ENCODE measurements at regions of chr9 and their contacts with region 1.

Region 1: DNA sequence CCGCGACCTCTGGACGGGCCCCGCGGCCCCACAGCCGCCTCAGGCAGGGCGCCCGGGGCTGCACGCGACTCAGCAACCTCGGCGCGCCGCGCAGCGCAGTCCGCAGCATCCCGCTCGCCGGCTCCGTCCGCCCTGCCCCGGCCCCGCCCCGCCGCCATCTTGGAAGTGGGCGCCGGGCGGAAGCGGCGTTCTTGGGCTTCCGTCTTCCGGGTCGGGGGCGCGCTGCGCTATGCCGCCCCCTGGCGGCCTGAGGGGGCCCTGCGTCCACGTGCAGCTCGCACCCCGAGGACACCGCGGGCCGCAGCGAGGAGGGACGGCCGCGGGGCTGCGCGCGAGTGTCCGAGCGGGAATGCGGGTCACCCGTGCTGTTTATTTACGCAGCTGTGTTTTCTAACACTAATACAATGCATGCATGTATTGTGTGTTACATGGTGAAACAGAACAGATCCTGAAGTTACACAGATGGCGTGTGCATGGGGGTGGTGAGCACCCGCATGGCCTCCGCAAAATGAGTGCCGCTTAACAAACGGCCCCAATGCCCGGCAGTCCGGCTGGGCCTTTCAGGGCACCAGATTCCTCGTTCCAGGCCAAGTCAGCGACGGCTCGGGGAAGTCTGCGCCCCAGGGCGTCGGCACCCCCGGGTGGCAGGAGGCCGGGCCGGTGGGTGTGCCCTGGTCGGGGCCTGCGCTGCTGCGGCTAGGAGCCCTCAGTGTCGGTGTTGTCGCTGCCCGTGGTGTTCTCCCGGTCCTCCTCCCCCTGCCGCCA is at the start of gene DNLZ:
- DNase-seq: peak; percentile 93
- ATAC-seq: peak; percentile 70
- H3K4me3 ChIP-seq: peak within 1 kb of the TSS; percentile 3 to 97 (median 71)
- H3K4me3 Mint-ChIP-seq: peak within 1 kb of the TSS; percentile 89
- H3K27ac ChIP-seq: peak within 1 kb of the TSS; percentile 40 to 53
- H3K27ac Mint-ChIP-seq: peak within 1 kb of the TSS; percentile 93
- H3K4me1 ChIP-seq: peaks cover 5 to 10% of the 10 kb centered on the region in 2 donors
- H3K4me1 Mint-ChIP-seq: peaks cover 10% of the 10 kb centered on the region
- H3K27me3 ChIP-seq: no peaks in the 10 kb centered on the region
- H3K27me3 Mint-ChIP-seq: no peaks in the 10 kb centered on the region
- CTCF ChIP-seq: peak; percentile 97
- total RNA-seq, gene DNLZ: 23.0 and 25.4 TPM in 2 replicates

Region 2: DNA sequence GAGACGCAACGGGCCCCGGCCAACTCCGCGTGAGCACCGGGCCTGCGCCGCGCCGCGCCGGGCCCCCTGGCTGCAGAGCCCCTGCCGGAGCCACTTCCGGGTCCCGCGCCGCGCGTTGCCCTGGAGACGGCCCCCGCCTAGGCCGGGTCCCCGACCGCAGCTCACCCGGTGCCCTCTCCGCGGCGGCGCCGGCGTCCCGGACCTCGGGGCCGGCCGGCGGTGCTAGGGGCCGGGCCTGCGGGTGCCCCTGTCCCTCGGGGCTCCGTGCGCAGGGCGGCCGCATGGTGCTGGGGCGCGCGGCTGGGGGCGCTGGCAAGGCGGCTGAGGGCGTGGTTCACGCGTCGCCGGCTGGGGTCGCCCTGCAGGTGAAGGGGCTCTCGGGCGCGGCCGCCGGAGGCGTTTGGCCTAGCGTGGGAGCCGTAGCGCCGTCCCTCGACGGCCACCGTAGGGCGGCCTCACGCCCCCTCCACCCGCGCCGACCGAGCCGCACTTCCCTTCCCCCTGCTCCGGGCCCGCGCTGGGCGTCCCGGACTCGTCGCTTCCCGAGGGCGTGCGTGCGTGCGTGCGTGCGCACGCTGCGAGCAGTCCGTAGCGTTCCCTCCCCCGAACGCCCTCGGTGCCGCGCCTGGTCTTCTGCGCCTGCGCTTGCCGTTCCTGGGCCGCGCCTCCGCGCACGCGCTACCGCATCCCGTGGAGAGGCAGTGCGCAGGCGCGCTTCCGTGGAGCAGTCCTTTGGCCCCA is 245.3 kb before region 1 on chr9 and contains the start of gene TMEM250:
- CTCF ChIA-PET with region 1: no interaction called
- POLR2A ChIA-PET with region 1: no interaction called
- intact Hi-C with region 1: loop called (anchors 1 kb)
- DNase-seq: peak; percentile 99
- ATAC-seq: peak; percentile 87
- H3K4me3 ChIP-seq: peak within 1 kb of the TSS; percentile 32 to 76 (median 64)
- H3K4me3 Mint-ChIP-seq: peak within 1 kb of the TSS; percentile 87
- H3K27ac ChIP-seq: peak within 1 kb of the TSS; percentile 51 to 94
- H3K27ac Mint-ChIP-seq: peak within 1 kb of the TSS; percentile 94
- H3K4me1 ChIP-seq: peaks cover 15 to 29% of the 10 kb centered on the region in 2 donors
- H3K4me1 Mint-ChIP-seq: peaks cover 14% of the 10 kb centered on the region
- H3K27me3 ChIP-seq: no peaks in the 10 kb centered on the region
- H3K27me3 Mint-ChIP-seq: no peaks in the 10 kb centered on the region
- CTCF ChIP-seq: no peak
- total RNA-seq, gene TMEM250: 29.6 and 30.4 TPM in 2 replicates

Region 3: DNA sequence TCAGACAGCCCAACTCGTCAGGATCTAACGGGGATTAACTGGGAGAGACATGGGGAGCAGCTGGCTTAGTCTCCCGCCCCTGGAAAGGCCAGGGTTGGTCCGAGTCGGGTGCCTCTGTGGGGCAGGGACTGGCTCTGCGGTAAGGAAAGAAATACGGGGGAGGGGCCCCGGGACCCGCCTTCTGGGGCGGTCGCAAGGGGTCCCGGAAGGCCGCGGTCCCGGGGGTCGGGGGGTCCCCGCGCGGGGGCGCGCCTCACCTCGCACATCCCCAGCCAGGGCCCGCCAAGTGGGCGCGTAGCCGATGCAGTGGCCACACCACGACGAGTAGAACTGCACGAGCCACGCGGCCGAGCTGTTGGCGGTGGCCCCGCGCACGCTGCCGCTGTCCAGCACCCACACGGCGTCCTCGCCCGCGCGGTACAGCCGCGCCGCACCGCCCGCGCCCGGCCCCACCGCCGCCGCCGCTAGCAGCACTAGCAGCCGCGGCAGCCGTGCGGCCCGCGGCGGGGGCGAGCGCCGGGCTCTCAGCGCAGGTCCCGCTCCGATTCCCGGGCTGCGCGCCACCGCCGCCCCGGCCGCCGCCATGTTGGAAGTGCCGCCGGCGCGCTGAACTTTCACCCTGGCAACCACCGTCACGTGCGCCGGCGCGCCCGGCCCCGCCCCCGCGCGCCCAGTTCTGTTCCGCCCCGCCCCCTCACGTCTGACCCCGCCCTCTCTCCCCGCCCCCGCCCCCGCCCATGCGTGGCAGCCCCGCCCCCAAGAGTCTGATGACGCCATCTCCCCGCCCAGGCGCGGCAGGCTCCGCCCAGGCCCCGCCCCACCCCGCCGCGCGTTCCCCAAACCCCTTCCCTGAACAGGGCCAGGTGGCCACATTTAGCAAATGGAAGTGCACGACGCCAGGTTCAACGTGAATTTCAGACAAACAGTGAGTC is 118.3 kb before region 1 on chr9 and contains the start of gene QSOX2:
- CTCF ChIA-PET with region 1: no interaction called
- POLR2A ChIA-PET with region 1: no interaction called
- intact Hi-C with region 1: loop called (anchors 1 kb)
- DNase-seq: peak; percentile 91
- ATAC-seq: peak; percentile 71
- H3K4me3 ChIP-seq: peak within 1 kb of the TSS; percentile 66 to 97 (median 90)
- H3K4me3 Mint-ChIP-seq: peak within 1 kb of the TSS; percentile 94
- H3K27ac ChIP-seq: peak within 1 kb of the TSS; percentile 70 to 83
- H3K27ac Mint-ChIP-seq: peak within 1 kb of the TSS; percentile 90
- H3K4me1 ChIP-seq: peaks cover 46 to 51% of the 10 kb centered on the region in 2 donors
- H3K4me1 Mint-ChIP-seq: peaks cover 50% of the 10 kb centered on the region
- H3K27me3 ChIP-seq: no peaks in the 10 kb centered on the region
- H3K27me3 Mint-ChIP-seq: no peaks in the 10 kb centered on the region
- CTCF ChIP-seq: no peak
- total RNA-seq, gene QSOX2: 139 and 141 TPM in 2 replicates

Region 4: DNA sequence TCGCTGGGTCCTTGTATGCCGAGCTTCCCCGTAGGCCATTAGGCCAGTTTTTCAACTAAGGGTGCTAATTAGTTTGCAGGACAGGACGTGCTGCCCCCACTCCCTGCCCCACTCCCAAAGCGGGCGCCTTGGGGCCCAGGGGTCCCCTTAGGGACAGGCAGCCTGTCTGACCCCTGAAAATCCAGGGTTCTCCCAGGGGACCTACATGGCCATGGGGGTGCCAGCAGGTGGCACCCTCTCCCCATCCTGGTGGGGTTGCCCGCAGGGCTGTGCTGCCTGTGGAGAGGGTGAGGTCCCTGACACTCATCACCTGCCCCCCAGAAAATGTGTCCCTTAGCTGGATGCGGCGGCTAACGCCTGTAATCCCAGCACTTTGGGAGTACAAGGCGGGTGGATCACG is 51.4 kb before region 1 on chr9:
- CTCF ChIA-PET with region 1: interaction called, 21 read pairs
- POLR2A ChIA-PET with region 1: interaction called, 4 read pairs
- intact Hi-C with region 1: loop called (anchors 1 kb)
- DNase-seq: peak; percentile 62
- ATAC-seq: peak; percentile 31
- H3K4me3 ChIP-seq: no peak overlapping the region
- H3K4me3 Mint-ChIP-seq: peak overlapping the region; percentile 14
- H3K27ac ChIP-seq: no peak overlapping the region
- H3K27ac Mint-ChIP-seq: no peak overlapping the region
- H3K4me1 ChIP-seq: peaks cover 48 to 49% of the 10 kb centered on the region in 2 donors
- H3K4me1 Mint-ChIP-seq: peaks cover 11% of the 10 kb centered on the region
- H3K27me3 ChIP-seq: peaks cover 0 to 28% (median 2%) of the 10 kb centered on the region in 4 experiments
- H3K27me3 Mint-ChIP-seq: peaks cover 11% of the 10 kb centered on the region
- CTCF ChIP-seq: peak; percentile 47

Region 5: GRCh38 chr9:136389396-136389795 is 25.6 kb after region 1 on chr9:
- CTCF ChIA-PET with region 1: no interaction called
- POLR2A ChIA-PET with region 1: no interaction called
- intact Hi-C with region 1: no loop called
- DNase-seq: no peak
- ATAC-seq: no peak
- H3K4me3 ChIP-seq: no peak overlapping the region
- H3K4me3 Mint-ChIP-seq: no peak overlapping the region
- H3K27ac ChIP-seq: no peak overlapping the region
- H3K27ac Mint-ChIP-seq: no peak overlapping the region
- H3K4me1 ChIP-seq: no peaks in the 10 kb centered on the region
- H3K4me1 Mint-ChIP-seq: no peaks in the 10 kb centered on the region
- H3K27me3 ChIP-seq: no peaks in the 10 kb centered on the region
- H3K27me3 Mint-ChIP-seq: no peaks in the 10 kb centered on the region
- CTCF ChIP-seq: no peak

Region 6: DNA sequence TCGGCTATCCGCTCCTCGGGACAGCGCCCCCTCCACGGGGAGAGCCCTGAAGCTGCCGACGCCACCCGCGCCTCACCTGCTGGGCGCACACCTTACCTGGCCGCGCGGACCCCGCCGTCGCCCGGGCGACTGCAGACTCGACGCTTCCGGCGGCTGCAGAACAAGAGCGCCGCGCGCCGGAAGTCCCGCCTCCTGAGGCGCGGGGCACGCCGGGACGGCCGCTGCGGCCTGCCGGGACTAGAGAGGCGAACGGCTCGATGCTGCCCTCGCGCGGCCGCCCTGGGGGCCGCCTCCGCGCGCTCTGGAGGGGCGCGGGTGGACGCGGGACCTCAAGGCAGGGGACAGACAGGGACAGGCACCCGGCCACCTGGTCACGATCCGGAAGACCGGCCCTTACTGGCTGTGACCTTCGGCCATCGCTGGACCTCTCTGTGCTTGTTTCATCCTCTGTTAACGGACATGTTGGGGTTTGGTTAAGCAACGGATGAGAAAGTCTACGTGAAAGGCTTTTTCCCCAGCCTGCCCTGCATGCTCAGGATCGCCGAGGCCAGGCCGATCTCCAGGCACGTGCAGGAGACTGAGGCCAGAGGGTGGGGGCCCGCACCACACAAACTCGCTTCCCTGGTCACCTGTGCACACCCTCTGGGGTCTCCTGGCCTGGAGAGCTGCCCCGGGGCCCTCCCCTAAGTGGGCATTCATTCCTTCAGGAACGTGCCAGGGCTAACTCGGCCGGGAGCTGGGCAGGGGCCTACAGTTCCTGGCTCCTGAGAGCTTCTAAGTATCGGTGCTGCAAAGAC is 36.4 kb after region 1 on chr9 and contains the start of gene SNAPC4:
- CTCF ChIA-PET with region 1: interaction called, 6 read pairs
- POLR2A ChIA-PET with region 1: interaction called, 4 read pairs
- intact Hi-C with region 1: loop called (anchors 1 kb)
- DNase-seq: peak; percentile 92
- ATAC-seq: peak; percentile 91
- H3K4me3 ChIP-seq: peak within 1 kb of the TSS; percentile 30 to 83 (median 76)
- H3K4me3 Mint-ChIP-seq: peak within 1 kb of the TSS; percentile 89
- H3K27ac ChIP-seq: peak within 1 kb of the TSS in 1 of 2 donors; percentile 54
- H3K27ac Mint-ChIP-seq: peak within 1 kb of the TSS; percentile 70
- H3K4me1 ChIP-seq: peaks cover 37 to 41% of the 10 kb centered on the region in 2 donors
- H3K4me1 Mint-ChIP-seq: peaks cover 42% of the 10 kb centered on the region
- H3K27me3 ChIP-seq: no peaks in the 10 kb centered on the region
- H3K27me3 Mint-ChIP-seq: no peaks in the 10 kb centered on the region
- CTCF ChIP-seq: peak; percentile 94
- total RNA-seq, gene SNAPC4: 15.4 and 15.6 TPM in 2 replicates

Measured in B cell (primary cell).